Activated T-helper 2 cell treated with anti-CD3 and anti-CD28 coated beads, Interferon-gamma antibody, Interleukin-2, Interleukin-4, amounts not matched to agents 10 μg/mL and 5 μg/mL and 100 μg/mL, durations not matched to agents 14 hours and 24 hours and 36 hours (primary cell): ENCODE measurements at regions of chr14 and their contacts with region 1.

Region 1: GRCh38 chr14:31420319-31421111 is at the start of gene HEATR5A:
- DNase-seq: peak; percentile 90
- H3K4me3 Mint-ChIP-seq: peak within 1 kb of the TSS; percentile 95
- H3K27ac Mint-ChIP-seq: peak within 1 kb of the TSS; percentile 90
- H3K4me1 Mint-ChIP-seq: peaks cover 24% of the 10 kb centered on the region
- H3K27me3 Mint-ChIP-seq: no peaks in the 10 kb centered on the region
- total RNA-seq, gene HEATR5A: 23.1 TPM in 2 replicates

Region 2: DNA sequence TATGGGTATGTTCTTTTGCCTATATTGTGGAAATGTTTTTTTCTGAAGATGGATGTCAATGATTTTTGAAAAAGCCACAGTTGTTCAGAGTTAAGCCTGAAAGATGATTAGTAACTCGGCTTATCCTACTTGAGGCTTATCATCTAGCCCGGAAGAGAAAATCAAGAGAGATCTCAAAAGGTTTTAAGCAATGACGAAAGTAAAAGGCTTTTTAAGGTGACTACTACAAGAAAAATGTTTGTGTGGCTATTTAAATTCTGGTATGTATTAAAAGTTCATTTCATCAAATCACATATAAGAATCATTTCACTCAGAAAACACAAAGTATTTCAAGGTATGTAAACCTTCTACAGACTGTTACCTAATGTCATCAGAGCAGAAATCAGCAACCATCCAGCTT is 40.4 kb before region 1 on chr14:
- intact Hi-C with region 1: loop called (anchors 2 kb)
- DNase-seq: no peak
- H3K4me3 Mint-ChIP-seq: no peak overlapping the region
- H3K27ac Mint-ChIP-seq: no peak overlapping the region
- H3K4me1 Mint-ChIP-seq: peaks cover 10% of the 10 kb centered on the region
- H3K27me3 Mint-ChIP-seq: no peaks in the 10 kb centered on the region

Region 3: GRCh38 chr14:31388687-31389413 is 31.7 kb before region 1 on chr14:
- intact Hi-C with region 1: loop called (anchors 1 kb)
- DNase-seq: no peak
- H3K4me3 Mint-ChIP-seq: no peak overlapping the region
- H3K27ac Mint-ChIP-seq: peak overlapping the region; percentile 73
- H3K4me1 Mint-ChIP-seq: peaks cover 30% of the 10 kb centered on the region
- H3K27me3 Mint-ChIP-seq: no peaks in the 10 kb centered on the region

Region 4: GRCh38 chr14:31400031-31400638 is 20.4 kb before region 1 on chr14:
- intact Hi-C with region 1: loop called (anchors 1 kb)
- DNase-seq: no peak
- H3K4me3 Mint-ChIP-seq: no peak overlapping the region
- H3K27ac Mint-ChIP-seq: peak overlapping the region; percentile 75
- H3K4me1 Mint-ChIP-seq: peaks cover 25% of the 10 kb centered on the region
- H3K27me3 Mint-ChIP-seq: no peaks in the 10 kb centered on the region

Region 5: GRCh38 chr14:31605702-31606101 is 185.2 kb after region 1 on chr14:
- intact Hi-C with region 1: no loop called
- DNase-seq: no peak
- H3K4me3 Mint-ChIP-seq: no peak overlapping the region
- H3K27ac Mint-ChIP-seq: no peak overlapping the region
- H3K4me1 Mint-ChIP-seq: no peaks in the 10 kb centered on the region
- H3K27me3 Mint-ChIP-seq: no peaks in the 10 kb centered on the region